RWPE1 (cell line): ENCODE measurements at regions of chr1 and their contacts with region 1.

Region 1: DNA sequence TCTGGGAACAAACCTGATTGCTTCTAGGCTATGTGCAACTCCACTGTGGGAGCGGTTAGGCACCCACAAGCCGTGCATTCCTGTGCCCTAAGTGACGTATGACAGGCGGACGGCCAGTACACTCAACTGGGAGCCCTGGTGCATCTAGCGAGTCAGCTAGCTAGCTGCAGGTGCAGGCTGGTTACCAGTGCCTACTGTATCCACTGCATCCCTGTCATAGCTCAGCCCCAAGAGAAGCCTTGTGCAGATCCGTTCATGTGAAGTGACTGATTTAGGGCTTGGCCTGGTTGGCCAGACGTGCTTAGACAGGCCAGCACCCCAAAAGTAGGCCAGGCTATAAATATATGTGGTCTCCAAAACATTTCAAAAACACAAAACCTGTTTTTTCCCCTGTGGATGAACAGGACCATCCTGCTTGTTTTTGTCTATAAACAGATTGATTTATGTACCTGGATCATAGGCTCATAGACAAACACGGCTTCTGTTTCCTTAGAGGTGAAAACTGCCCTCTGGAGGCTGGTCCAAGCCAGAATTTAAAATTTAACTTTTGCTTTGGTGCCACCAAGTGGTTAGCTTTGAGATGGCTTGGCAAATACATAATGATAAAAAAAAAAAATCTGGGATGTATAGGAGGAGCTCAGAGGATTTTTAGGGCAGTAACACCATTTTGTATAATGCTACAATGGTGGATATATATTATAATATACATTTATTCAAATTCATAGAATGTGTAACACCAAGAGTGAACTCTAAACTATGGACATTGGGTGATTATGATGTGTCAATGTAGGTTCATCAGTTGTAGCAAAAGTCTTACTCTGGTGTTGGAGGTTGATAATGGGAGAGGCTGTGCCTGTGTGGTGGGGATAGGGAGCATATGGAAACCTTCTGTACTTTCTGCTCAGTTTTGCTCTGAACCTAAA is 68.5 kb downstream of the GIPC2 start:
- DNase-seq: peak; percentile 77
- H3K27ac ChIP-seq: peak overlapping the region; percentile 64
- CTCF ChIP-seq: peak; percentile 85

Region 2: GRCh38 chr1:77978969-77979876 is 135.1 kb before region 1 on chr1 and contains the start of gene FUBP1:
- CTCF ChIA-PET with region 1: interaction called, 13 read pairs
- POLR2A ChIA-PET with region 1: no interaction called
- DNase-seq: peak; percentile 92
- H3K27ac ChIP-seq: peak within 1 kb of the TSS; percentile 98
- CTCF ChIP-seq: peak; percentile 85

Region 3: DNA sequence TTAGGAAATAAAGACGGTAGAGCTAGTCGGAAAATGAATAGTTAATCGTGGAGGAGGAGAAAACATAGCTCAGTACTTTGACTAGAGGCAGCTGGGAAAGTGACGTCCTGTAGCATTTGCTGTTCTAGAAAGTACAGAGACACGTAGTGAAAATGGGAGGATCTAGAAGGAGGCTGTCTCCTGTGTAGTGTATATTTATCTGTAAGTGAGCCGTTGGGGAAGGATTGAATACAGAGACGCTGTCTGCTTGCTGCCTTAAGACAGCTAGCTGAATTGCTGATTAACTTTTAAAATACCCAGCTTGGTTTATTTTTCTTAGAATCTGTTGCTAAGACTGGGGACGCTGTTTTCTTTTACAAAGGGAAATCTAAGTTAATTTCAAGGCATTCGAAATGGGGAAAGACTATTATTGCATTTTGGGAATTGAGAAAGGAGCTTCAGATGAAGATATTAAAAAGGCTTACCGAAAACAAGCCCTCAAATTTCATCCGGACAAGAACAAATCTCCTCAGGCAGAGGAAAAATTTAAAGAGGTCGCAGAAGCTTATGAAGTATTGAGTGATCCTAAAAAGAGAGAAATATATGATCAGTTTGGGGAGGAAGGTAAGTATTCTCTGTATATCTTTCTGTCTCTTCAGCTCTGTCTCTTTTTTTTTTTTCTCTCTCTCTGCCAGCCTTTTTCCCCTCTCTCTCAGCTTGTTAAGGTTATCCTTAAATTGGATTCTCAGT is 109.4 kb before region 1 on chr1 and contains the start of gene DNAJB4:
- CTCF ChIA-PET with region 1: interaction called, 12 read pairs
- POLR2A ChIA-PET with region 1: interaction called, 19 read pairs
- DNase-seq: peak; percentile 83
- H3K27ac ChIP-seq: no peak within 1 kb of the TSS
- CTCF ChIP-seq: no peak